ENCODE measurements at regions of chr12 and their contacts with region 1.

Region 1: DNA sequence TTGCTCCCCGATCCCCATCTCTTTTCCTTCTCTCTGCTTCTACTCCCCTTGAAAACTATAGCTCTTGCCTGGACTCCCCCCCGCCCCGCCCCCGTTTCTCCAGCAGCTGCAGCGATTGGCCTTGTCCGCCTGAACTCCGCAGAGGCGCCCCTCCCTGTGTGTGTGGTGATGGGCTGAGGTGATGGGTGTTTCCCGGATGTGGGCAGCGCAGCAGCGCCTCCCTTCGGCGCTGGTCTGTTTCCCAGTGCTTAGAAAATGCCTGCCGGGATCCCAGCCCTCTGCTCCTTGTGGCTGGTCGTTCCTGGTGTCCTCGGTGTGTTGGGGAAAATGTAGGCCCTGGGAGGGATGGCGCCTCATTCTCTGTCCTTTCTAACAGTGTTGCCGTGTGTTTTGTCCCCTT is 43.3 kb downstream of the GALNT8 start:
- DNase-seq: no peak
- ATAC-seq: no peak
- H3K4me3 ChIP-seq: no peak overlapping the region
- H3K4me3 Mint-ChIP-seq: no peak overlapping the region
- H3K27ac ChIP-seq: no peak overlapping the region
- H3K27ac Mint-ChIP-seq: peak overlapping the region in 1 of 9 donors; percentile 5
- H3K4me1 ChIP-seq: no peaks in the 10 kb centered on the region
- H3K4me1 Mint-ChIP-seq: peaks cover 0 to 4% (median 0%) of the 10 kb centered on the region in 7 donors
- H3K27me3 ChIP-seq: no peaks in the 10 kb centered on the region
- H3K27me3 Mint-ChIP-seq: peaks cover 0 to 12% (median 0%) of the 10 kb centered on the region in 5 donors

Region 2: GRCh38 chr12:4353785-4354208 is 409.8 kb before region 1 on chr12:
- CTCF ChIA-PET with region 1: interaction called, 4 read pairs
- POLR2A ChIA-PET with region 1: no interaction called
- intact Hi-C with region 1: loop called (anchors 1 to 5 kb)
- DNase-seq: peak in 7 of 9 donors; percentile 32 to 64 (median 53)
- ATAC-seq: peak; percentile 90
- H3K4me3 ChIP-seq: no peak overlapping the region
- H3K4me3 Mint-ChIP-seq: no peak overlapping the region
- H3K27ac ChIP-seq: no peak overlapping the region
- H3K27ac Mint-ChIP-seq: peak overlapping the region in 7 of 9 donors; percentile 14 to 71 (median 51)
- H3K4me1 ChIP-seq: no peaks in the 10 kb centered on the region
- H3K4me1 Mint-ChIP-seq: peaks cover 0 to 9% (median 4%) of the 10 kb centered on the region in 7 donors
- H3K27me3 ChIP-seq: no peaks in the 10 kb centered on the region
- H3K27me3 Mint-ChIP-seq: peaks cover 0 to 2% (median 0%) of the 10 kb centered on the region in 5 donors

Region 3: GRCh38 chr12:4421590-4422031 is 341.9 kb before region 1 on chr12:
- CTCF ChIA-PET with region 1: no interaction called
- POLR2A ChIA-PET with region 1: no interaction called
- intact Hi-C with region 1: loop called in 1 of 2 experiments (anchors 1 kb)
- DNase-seq: peak in 7 of 9 donors; percentile 17 to 61 (median 39)
- ATAC-seq: peak; percentile 62
- H3K4me3 ChIP-seq: no peak overlapping the region
- H3K4me3 Mint-ChIP-seq: no peak overlapping the region
- H3K27ac ChIP-seq: no peak overlapping the region
- H3K27ac Mint-ChIP-seq: peak overlapping the region in 3 of 9 donors; percentile 34 to 50 (median 49)
- H3K4me1 ChIP-seq: no peaks in the 10 kb centered on the region
- H3K4me1 Mint-ChIP-seq: peaks cover 0 to 3% (median 0%) of the 10 kb centered on the region in 7 donors
- H3K27me3 ChIP-seq: no peaks in the 10 kb centered on the region
- H3K27me3 Mint-ChIP-seq: peaks cover 3 to 14% (median 9%) of the 10 kb centered on the region in 5 donors

Region 4: DNA sequence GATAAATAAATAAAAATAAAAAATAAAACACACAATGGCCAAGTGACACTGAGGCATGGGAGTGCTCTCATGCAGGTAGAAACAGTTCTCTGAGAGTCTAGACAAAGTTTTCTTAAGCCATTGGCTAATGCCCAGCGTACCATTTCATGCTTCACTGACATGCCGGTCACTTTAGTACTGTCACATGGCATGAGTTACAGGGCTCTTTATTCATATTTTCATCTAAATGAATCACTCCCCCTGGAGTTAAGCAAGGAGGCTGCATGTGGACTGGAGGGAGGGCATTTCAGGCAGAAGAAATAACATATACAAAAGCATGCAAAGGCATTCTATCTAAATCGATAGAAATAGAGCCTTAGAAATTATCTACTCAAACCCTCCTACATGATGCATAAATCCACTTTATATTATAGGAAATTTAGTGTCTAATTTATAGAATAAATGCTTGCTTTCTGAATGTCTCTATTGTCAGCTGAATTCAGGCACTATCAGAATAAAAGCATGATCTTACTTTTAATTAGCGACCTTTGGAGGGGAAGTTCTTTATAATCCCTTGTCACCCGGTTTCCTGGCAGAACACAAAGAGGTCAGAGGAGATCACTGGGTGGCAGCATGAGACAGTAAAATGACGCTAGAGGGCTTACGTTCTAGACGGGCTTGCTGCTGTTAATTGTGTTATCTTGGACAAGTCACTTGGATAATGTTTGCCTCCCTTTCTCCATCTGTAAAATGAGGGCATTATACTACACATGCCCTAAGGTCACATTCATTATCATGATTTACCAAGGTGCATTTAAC is 184.0 kb before region 1 on chr12:
- CTCF ChIA-PET with region 1: interaction called, 3 read pairs
- POLR2A ChIA-PET with region 1: no interaction called
- intact Hi-C with region 1: loop called in 1 of 2 experiments (anchors 5 kb)
- DNase-seq: peak in 3 of 9 donors; percentile 4 to 17 (median 7)
- ATAC-seq: peak; percentile 26
- H3K4me3 ChIP-seq: no peak overlapping the region
- H3K4me3 Mint-ChIP-seq: no peak overlapping the region
- H3K27ac ChIP-seq: no peak overlapping the region
- H3K27ac Mint-ChIP-seq: no peak overlapping the region
- H3K4me1 ChIP-seq: no peaks in the 10 kb centered on the region
- H3K4me1 Mint-ChIP-seq: no peaks in the 10 kb centered on the region
- H3K27me3 ChIP-seq: no peaks in the 10 kb centered on the region
- H3K27me3 Mint-ChIP-seq: peaks cover 4 to 18% (median 10%) of the 10 kb centered on the region in 5 donors

Region 5: DNA sequence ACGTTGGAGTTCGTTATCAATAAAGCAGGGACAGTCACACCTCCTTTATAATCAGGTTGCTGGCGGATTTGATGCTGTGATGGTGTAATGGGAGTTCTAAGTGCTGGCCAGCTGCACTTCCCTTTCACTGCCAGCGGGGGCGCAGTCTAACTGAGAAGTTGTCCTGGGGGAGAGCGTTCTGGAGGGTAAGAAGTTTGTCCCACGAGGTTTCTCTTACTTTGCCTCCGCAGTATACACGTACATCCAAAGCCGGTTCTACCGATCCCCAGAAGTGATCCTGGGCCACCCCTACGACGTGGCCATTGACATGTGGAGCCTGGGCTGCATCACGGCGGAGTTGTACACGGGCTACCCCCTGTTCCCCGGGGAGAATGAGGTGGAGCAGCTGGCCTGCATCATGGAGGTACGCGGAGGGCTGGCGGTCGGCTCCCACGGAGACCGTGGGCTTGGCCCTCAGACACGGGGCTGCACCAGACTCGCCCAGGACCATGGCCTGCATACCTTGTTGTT is 158.8 kb before region 1 on chr12:
- CTCF ChIA-PET with region 1: interaction called, 11 read pairs
- POLR2A ChIA-PET with region 1: no interaction called
- intact Hi-C with region 1: loop called (anchors 1 to 5 kb)
- DNase-seq: peak; percentile 63 to 82 (median 76)
- ATAC-seq: peak; percentile 99
- H3K4me3 ChIP-seq: peak overlapping the region; percentile 92
- H3K4me3 Mint-ChIP-seq: peak overlapping the region; percentile 83 to 99 (median 98)
- H3K27ac ChIP-seq: peak overlapping the region; percentile 67
- H3K27ac Mint-ChIP-seq: peak overlapping the region; percentile 83 to 97 (median 90)
- H3K4me1 ChIP-seq: peaks cover 7 to 10% of the 10 kb centered on the region in 2 donors
- H3K4me1 Mint-ChIP-seq: peaks cover 16 to 48% (median 35%) of the 10 kb centered on the region in 7 donors
- H3K27me3 ChIP-seq: no peaks in the 10 kb centered on the region
- H3K27me3 Mint-ChIP-seq: peaks cover 0 to 19% (median 7%) of the 10 kb centered on the region in 5 donors

Measured in naive thymus-derived CD4-positive, alpha-beta T cell (primary cell).